ENCODE measurements at regions of chr12 and their contacts with region 1.

Region 1: GRCh38 chr12:7638760-7639555 is 26.8 kb downstream of the APOBEC1 start:
- DNase-seq: peak; percentile 36 to 83 (median 72)
- H3K4me3 ChIP-seq: peak overlapping the region in 48 of 59 donors; percentile 12 to 60 (median 39)
- H3K27ac ChIP-seq: peak overlapping the region in 7 of 59 donors; percentile 1 to 67 (median 18)
- H3K27me3 ChIP-seq: peaks cover 0 to 9% (median 0%) of the 10 kb centered on the region in 45 donors
- CTCF ChIP-seq: peak; percentile 89 to 99 (median 97)

Region 2: DNA sequence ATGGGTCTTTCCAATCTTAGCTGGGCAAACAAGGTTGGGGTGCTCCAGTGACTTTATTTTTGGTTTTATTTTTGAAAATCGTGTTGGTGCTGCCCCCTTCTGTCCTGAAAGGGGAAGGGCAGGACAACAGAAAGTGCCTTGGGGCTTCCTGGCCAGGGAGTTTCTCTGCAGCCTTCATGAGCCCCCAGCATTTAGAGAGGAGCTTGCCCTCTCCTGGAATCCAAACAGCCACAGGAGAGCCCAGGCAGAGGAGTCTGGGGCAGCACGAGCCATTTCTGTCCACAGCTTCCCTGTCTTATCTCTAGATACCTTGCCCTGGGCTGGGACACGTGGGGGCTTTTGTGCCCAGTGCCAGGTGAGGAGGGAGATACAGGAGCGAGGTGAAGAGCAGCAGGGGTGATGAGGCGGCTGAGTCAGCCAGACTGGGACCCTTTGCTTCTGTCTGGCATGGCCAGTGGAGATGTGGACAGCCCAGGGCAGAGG is 525.5 kb before region 1 on chr12:
- intact Hi-C with region 1: no loop called
- DNase-seq: no peak
- H3K4me3 ChIP-seq: no peak overlapping the region
- H3K27ac ChIP-seq: no peak overlapping the region
- H3K27me3 ChIP-seq: no peaks in the 10 kb centered on the region
- CTCF ChIP-seq: peak; percentile 62 to 95 (median 82)

Region 3: GRCh38 chr12:7219599-7220243 is 419.2 kb before region 1 on chr12:
- intact Hi-C with region 1: loop called (anchors 1 to 2 kb)
- DNase-seq: peak; percentile 33 to 88 (median 62)
- H3K4me3 ChIP-seq: no peak overlapping the region
- H3K27ac ChIP-seq: no peak overlapping the region
- H3K27me3 ChIP-seq: no peaks in the 10 kb centered on the region
- CTCF ChIP-seq: peak; percentile 76 to 99 (median 95)

Region 4: DNA sequence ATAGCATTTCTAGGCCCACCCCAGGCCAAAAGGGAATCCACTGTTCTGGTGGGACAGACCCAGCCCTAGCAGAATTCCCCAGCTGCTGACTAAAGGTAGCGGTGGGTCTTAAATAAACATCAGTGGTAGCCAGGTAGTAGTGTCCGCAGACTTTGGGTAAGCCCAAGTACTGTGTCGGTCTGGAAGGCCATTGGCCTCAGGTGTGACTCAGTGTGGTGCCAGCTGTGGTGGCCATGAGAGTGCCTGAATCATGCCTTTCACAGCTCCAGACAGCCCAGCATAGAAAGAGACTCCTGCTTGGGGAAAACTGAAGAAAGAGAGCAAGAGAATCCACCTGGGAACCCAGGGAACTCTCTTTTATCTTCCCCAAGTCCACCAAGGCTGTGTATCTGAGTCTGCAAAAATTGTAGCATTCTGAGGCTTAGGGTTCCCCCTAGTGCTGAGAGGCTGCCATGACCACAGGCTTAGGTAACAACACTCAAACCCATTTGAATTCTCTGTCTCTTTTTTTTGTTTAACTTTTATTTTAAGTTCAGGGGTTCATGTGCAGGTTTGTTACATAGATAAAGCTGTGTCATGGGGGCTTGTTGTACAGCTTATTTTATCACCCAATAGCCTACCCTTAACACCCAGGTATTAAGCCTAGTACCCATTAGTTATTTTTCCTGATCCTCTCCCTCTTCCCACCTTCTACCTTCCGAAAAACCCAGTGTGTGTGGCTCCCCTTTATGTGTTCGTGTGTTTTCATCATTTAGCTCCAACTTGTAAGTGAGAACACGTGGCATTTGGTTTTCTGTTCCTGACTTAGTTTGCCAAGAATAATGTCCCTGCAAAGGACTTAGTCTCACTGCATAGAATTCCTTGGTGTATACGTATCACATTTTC is 178.3 kb before region 1 on chr12:
- intact Hi-C with region 1: loop called in 1 of 2 experiments (anchors 5 kb)
- DNase-seq: peak in 6 of 10 donors; percentile 19 to 71 (median 60)
- H3K4me3 ChIP-seq: no peak overlapping the region
- H3K27ac ChIP-seq: no peak overlapping the region
- H3K27me3 ChIP-seq: peaks cover 0 to 4% (median 0%) of the 10 kb centered on the region in 45 donors
- CTCF ChIP-seq: peak; percentile 44 to 92 (median 78)

Region 5: DNA sequence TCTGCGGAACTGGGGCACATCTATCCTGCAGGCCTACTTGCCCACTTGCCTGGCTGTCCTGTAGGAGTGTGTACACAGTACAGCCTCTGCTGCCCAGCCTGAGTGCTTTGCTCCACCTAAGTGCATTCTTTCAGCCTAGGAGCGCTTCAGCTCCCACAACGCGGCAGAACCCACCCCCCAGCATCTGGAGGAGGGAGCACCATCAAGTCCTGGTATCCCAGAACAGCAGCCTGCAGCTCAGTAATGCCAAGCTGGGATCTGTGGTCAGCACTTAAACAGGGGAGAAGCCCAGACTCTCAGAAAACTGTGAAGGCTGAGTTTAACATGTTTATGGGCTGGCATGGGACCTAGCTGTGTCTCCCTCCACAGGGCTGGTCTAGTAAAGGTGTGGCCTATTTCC is 55.4 kb before region 1 on chr12:
- intact Hi-C with region 1: loop called in 1 of 2 experiments (anchors 5 kb)
- DNase-seq: no peak
- H3K4me3 ChIP-seq: no peak overlapping the region
- H3K27ac ChIP-seq: no peak overlapping the region
- H3K27me3 ChIP-seq: peaks cover 0 to 6% (median 0%) of the 10 kb centered on the region in 45 donors
- CTCF ChIP-seq: no peak